Panc1 (cell line): ENCODE measurements at regions of chr9 and their contacts with region 1.

Region 1: GRCh38 chr9:90219548-90220118 is 423.0 kb downstream of the DIRAS2 start:
- DNase-seq: no peak
- ATAC-seq: no peak
- H3K4me3 ChIP-seq: no peak overlapping the region
- H3K27ac ChIP-seq: no peak overlapping the region
- H3K4me1 ChIP-seq: no peaks in the 10 kb centered on the region
- H3K27me3 ChIP-seq: no peaks in the 10 kb centered on the region
- CTCF ChIP-seq: peak; percentile 74

Region 2: GRCh38 chr9:89597711-89598625 is 621.7 kb before region 1 on chr9:
- CTCF ChIA-PET with region 1: no interaction called
- POLR2A ChIA-PET with region 1: no interaction called
- in situ Hi-C with region 1: no loop called
- intact Hi-C with region 1: loop called (anchors 10 kb)
- DNase-seq: no peak
- ATAC-seq: peak; percentile 77
- H3K4me3 ChIP-seq: no peak overlapping the region
- H3K27ac ChIP-seq: no peak overlapping the region
- H3K4me1 ChIP-seq: no peaks in the 10 kb centered on the region
- H3K27me3 ChIP-seq: no peaks in the 10 kb centered on the region; the same call in 1 of the 2 replicates
- CTCF ChIP-seq: peak; percentile 82

Region 3: DNA sequence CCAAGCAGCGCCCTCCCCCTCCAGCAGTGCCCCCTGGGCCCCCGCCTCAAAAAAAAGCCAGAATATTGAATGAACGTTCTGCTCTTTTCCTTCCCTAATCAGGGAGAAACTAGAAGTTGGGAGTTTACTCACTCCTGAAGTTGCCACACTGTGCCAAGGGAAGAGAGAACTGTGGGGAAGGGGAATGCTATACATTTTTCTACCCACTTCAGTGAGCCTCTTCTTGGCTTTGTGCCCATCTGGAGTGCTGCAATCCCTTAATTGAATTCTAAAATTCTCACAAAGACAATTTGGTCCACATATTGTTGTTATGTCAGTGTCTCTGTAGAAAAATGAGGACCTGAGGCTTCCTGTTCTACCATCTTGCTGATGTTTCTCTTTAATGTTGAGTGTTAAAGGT is 20.7 kb before region 1 on chr9:
- CTCF ChIA-PET with region 1: no interaction called
- POLR2A ChIA-PET with region 1: no interaction called
- in situ Hi-C with region 1: no loop called
- intact Hi-C with region 1: no loop called
- DNase-seq: no peak
- ATAC-seq: no peak
- H3K4me3 ChIP-seq: no peak overlapping the region
- H3K27ac ChIP-seq: no peak overlapping the region
- H3K4me1 ChIP-seq: no peaks in the 10 kb centered on the region
- H3K27me3 ChIP-seq: no peaks in the 10 kb centered on the region
- CTCF ChIP-seq: no peak

Region 4: DNA sequence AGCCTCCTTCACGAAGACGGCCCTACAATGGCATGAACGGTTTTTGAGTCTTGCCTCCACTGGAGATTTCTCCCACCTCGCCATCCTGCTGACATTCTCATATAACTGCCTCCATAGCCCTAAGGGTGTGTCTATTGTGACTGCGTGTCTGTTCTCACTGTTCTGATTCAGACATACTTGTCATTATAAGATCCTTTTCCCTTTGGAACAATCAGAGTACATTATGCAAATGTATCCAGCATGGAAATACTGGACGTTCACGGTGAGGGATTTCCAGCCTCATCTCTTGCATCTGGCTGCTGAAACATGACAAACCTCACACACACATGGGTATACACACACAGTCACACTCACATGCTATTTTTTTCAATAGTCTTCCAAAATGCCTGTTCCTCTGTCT is 20.9 kb after region 1 on chr9:
- CTCF ChIA-PET with region 1: no interaction called
- POLR2A ChIA-PET with region 1: no interaction called
- in situ Hi-C with region 1: no loop called
- intact Hi-C with region 1: no loop called
- DNase-seq: no peak
- ATAC-seq: no peak
- H3K4me3 ChIP-seq: no peak overlapping the region
- H3K27ac ChIP-seq: no peak overlapping the region
- H3K4me1 ChIP-seq: no peaks in the 10 kb centered on the region
- H3K27me3 ChIP-seq: no peaks in the 10 kb centered on the region
- CTCF ChIP-seq: no peak

Region 5: GRCh38 chr9:90870621-90871326 is 651.1 kb after region 1 on chr9:
- CTCF ChIA-PET with region 1: no interaction called
- POLR2A ChIA-PET with region 1: no interaction called
- in situ Hi-C with region 1: no loop called
- intact Hi-C with region 1: loop called (anchors 10 kb)
- DNase-seq: peak; percentile 17
- ATAC-seq: no peak
- H3K4me3 ChIP-seq: no peak overlapping the region
- H3K27ac ChIP-seq: no peak overlapping the region
- H3K4me1 ChIP-seq: no peaks in the 10 kb centered on the region
- H3K27me3 ChIP-seq: no peaks in the 10 kb centered on the region
- CTCF ChIP-seq: peak; percentile 75; the same call in 1 of the 2 replicates